HEK293T (cell line): ENCODE measurements at regions of chr10 and their contacts with region 1.

Region 1: GRCh38 chr10:14200698-14201544 is 129.8 kb downstream of the FRMD4A start:
- DNase-seq: peak; percentile 55

Region 2: GRCh38 chr10:14185316-14186045 is 15.4 kb before region 1 on chr10:
- CTCF ChIA-PET with region 1: interaction called, 15 read pairs
- POLR2A ChIA-PET with region 1: interaction called, 8 read pairs
- DNase-seq: peak; percentile 52

Region 3: DNA sequence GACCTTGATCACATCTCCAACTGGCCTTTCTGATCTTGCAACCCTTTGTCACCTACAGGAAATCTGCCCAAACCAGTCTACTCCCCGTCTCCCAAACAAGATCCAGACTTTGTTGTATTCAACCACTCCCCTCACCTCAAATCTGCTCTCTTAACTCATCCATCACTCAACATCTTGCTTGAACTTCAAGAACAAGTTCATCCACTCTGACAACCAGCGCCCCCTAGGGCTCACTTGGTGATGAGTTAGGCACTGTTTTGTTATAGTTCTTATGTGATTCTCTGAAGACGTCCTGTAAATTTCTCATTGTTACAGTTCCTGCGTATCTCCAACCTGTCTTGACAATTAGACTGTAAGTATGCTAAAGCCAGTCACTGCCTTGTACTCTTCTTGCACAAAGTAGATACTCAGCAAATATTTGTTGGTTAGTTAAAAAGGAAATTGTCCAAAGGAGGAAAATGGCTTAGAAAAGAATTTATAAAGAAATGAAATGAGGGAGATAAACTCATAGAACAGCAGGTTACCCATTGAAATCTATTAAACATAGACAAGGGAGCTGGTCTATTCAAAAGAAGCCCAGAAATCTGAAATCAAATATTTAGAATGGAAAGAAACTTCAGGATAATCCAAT is 124.5 kb after region 1 on chr10:
- CTCF ChIA-PET with region 1: interaction called, 11 read pairs
- POLR2A ChIA-PET with region 1: no interaction called
- DNase-seq: peak; percentile 52

Region 4: GRCh38 chr10:14478604-14479003 is 277.7 kb after region 1 on chr10:
- CTCF ChIA-PET with region 1: interaction called, 13 read pairs
- POLR2A ChIA-PET with region 1: no interaction called
- DNase-seq: peak; percentile 69